ENCODE measurements at regions of chr3 and their contacts with region 1.

Region 1: GRCh38 chr3:46089237-46090011 is 62.1 kb upstream of the XCR1 start:
- DNase-seq: no peak
- ATAC-seq: peak; percentile 40; the same call in 1 of the 2 replicates
- H3K4me3 ChIP-seq: no peak overlapping the region
- H3K27ac ChIP-seq: no peak overlapping the region
- H3K4me1 ChIP-seq: peaks cover 0 to 15% of the 10 kb centered on the region in 2 experiments; a peak in 1 of 4 replicates
- H3K27me3 ChIP-seq: no peaks in the 10 kb centered on the region
- CTCF ChIP-seq: no peak
- POLR2A ChIP-seq: no peak
- RAD21 ChIP-seq: no peak

Region 2: GRCh38 chr3:46208167-46208704 is 118.8 kb after region 1 on chr3 and contains the start of gene CCR1:
- CTCF ChIA-PET with region 1: interaction called, 8 read pairs
- POLR2A ChIA-PET with region 1: no interaction called
- RAD21 ChIA-PET with region 1: no interaction called
- intact Hi-C with region 1: loop called (anchors 1 kb)
- DNase-seq: peak; percentile 45
- ATAC-seq: peak; percentile 91
- H3K4me3 ChIP-seq: no peak within 1 kb of the TSS
- H3K27ac ChIP-seq: no peak within 1 kb of the TSS
- H3K4me1 ChIP-seq: peaks cover 0 to 9% of the 10 kb centered on the region in 2 experiments; a peak in 2 of 4 replicates
- H3K27me3 ChIP-seq: 0 out of 2 replicates have a peak, but pooled peaks cover 3% of the 10 kb centered on the region
- CTCF ChIP-seq: peak; percentile 75 to 91 (median 83)
- POLR2A ChIP-seq: no peak
- RAD21 ChIP-seq: peak; percentile 88
- total RNA-seq, gene CCR1: 0.10 TPM

Region 3: DNA sequence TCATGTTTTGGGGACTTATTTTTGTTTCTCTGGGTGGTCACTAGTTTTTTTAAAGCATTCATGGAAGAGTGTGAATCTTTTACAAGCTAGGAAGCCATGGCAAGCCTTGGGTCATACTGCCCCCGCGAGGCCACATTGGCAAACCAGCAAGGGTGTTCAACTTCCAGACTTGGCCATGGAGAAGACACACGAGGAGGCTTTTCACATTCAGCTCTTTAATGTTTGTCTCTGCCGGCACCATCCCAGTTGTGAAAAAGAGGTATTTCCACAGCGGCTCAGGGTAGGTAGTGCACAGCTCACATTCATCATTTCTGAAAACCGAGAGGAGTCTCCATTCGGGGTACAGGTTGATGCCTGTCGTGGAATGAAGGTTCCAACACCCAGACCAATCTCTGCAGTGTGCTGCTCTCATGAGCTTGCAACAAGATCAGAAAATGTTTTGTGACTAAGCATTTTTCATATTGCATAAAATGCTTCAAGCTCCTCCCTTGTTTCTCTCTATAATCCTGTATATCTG is 289.1 kb after region 1 on chr3:
- CTCF ChIA-PET with region 1: interaction called, 10 read pairs
- POLR2A ChIA-PET with region 1: no interaction called
- RAD21 ChIA-PET with region 1: no interaction called
- intact Hi-C with region 1: loop called (anchors 2 kb)
- DNase-seq: peak; percentile 48
- ATAC-seq: peak; percentile 97
- H3K4me3 ChIP-seq: no peak overlapping the region
- H3K27ac ChIP-seq: no peak overlapping the region
- H3K4me1 ChIP-seq: peaks cover 0 to 3% of the 10 kb centered on the region in 2 experiments; a peak in 1 of 4 replicates
- H3K27me3 ChIP-seq: peaks cover 27% of the 10 kb centered on the region
- CTCF ChIP-seq: peak; percentile 66 to 92 (median 87)
- POLR2A ChIP-seq: no peak
- RAD21 ChIP-seq: peak; percentile 85

Measured in HCT116 (cell line).